ENCODE measurements at regions of chr1 and their contacts with region 1.

Region 1: DNA sequence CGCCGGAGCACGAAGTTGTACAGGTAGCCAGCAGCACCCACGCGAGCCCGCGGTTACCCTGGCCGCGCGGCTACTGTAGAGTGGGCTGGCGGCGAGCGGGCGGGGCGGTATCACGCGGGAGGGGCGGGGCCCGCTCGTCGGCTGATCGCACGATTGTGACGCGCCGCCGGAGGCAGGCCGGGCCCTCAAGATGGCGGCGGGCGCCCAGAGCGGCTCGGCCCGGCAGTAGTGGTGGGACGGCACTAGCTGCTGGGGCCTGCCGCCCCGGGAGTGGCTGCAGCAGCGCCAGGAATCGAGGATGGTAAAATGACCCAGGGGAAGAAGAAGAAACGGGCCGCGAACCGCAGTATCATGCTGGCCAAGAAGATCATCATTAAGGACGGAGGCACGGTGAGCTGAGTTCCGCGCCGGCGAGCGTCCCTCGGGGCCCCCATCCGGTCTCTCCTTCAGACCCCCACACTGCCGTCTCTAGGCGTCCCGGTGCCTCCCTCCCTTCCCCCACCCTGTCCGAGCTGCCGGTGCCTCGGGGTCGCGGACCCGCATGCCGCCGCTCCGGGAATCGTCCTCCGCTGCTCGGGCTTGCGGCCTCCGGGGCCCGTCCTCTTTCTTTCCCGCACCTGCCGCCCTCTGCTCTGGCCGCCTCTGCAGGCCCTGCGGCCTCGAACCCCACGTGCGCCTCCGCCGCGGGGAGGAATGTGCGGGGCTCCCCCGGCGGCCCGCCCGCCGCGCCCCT is 68.3 kb downstream of the SLC35A3 start:
- DNase-seq: peak; percentile 79 to 88
- H3K4me3 ChIP-seq: peak overlapping the region; percentile 60
- H3K4me3 Mint-ChIP-seq: peak overlapping the region; percentile 99
- H3K27ac Mint-ChIP-seq: peak overlapping the region; percentile 99
- H3K4me1 ChIP-seq: 0 out of 2 replicates have a peak, but pooled peaks cover 5% of the 10 kb centered on the region
- H3K4me1 Mint-ChIP-seq: no peaks in the 10 kb centered on the region
- H3K27me3 ChIP-seq: no peaks in the 10 kb centered on the region
- H3K27me3 Mint-ChIP-seq: no peaks in the 10 kb centered on the region
- CTCF ChIP-seq: no peak

Region 2: GRCh38 chr1:99590578-99591209 is 447.4 kb before region 1 on chr1:
- CTCF ChIA-PET with region 1: no interaction called
- POLR2A ChIA-PET with region 1: no interaction called
- intact Hi-C with region 1: no loop called
- DNase-seq: no peak
- H3K4me3 ChIP-seq: no peak overlapping the region
- H3K4me3 Mint-ChIP-seq: no peak overlapping the region
- H3K27ac Mint-ChIP-seq: no peak overlapping the region
- H3K4me1 ChIP-seq: peaks cover 15% of the 10 kb centered on the region; the same call in 1 of the 2 replicates
- H3K4me1 Mint-ChIP-seq: peaks cover 6% of the 10 kb centered on the region
- H3K27me3 ChIP-seq: no peaks in the 10 kb centered on the region
- H3K27me3 Mint-ChIP-seq: no peaks in the 10 kb centered on the region
- CTCF ChIP-seq: no peak

Region 3: GRCh38 chr1:99808391-99809115 is 229.5 kb before region 1 on chr1:
- CTCF ChIA-PET with region 1: no interaction called
- POLR2A ChIA-PET with region 1: interaction called, 5 read pairs
- intact Hi-C with region 1: loop called (anchors 1 kb)
- DNase-seq: peak; percentile 49 to 58
- H3K4me3 ChIP-seq: no peak overlapping the region
- H3K4me3 Mint-ChIP-seq: no peak overlapping the region
- H3K27ac Mint-ChIP-seq: no peak overlapping the region
- H3K4me1 ChIP-seq: 0 out of 2 replicates have a peak, but pooled peaks cover 3% of the 10 kb centered on the region
- H3K4me1 Mint-ChIP-seq: no peaks in the 10 kb centered on the region
- H3K27me3 ChIP-seq: no peaks in the 10 kb centered on the region
- H3K27me3 Mint-ChIP-seq: no peaks in the 10 kb centered on the region
- CTCF ChIP-seq: peak in 1 of 2 experiments; percentile 3

Region 4: DNA sequence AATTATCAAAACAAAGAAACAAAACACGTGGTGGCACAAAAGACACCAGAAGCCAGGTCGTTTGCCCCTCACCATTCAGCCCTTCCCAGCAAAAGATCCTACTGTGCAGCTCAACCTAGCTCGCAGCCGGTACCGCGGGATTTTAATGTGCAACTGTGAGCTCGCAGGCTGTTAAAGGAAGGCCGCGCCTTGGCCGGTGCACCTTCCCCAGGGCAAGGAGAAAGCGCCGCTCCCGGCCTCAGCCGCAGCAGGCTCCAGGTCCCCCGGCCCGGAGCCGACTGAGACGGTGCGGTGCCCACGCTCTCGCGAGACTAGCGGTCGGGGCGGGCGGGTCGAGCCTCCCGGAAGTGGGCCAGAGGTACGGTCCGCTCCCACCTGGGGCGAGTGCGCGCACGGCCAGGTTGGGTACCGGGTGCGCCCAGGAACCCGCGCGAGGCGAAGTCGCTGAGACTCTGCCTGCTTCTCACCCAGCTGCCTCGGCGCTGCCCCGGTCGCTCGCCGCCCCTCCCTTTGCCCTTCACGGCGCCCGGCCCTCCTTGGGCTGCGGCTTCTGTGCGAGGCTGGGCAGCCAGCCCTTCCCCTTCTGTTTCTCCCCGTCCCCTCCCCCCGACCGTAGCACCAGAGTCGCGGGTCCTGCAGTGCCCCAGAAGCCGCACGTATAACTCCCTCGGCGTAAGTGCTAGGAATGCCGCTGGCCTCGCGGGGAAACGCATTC is 188.2 kb before region 1 on chr1 and contains the start of gene AGL:
- CTCF ChIA-PET with region 1: no interaction called
- POLR2A ChIA-PET with region 1: no interaction called
- intact Hi-C with region 1: loop called (anchors 5 kb)
- DNase-seq: peak; percentile 92
- H3K4me3 ChIP-seq: peak within 1 kb of the TSS; percentile 83
- H3K4me3 Mint-ChIP-seq: peak within 1 kb of the TSS; percentile 95
- H3K27ac Mint-ChIP-seq: peak within 1 kb of the TSS; percentile 93
- H3K4me1 ChIP-seq: 0 out of 2 replicates have a peak, but pooled peaks cover 4% of the 10 kb centered on the region
- H3K4me1 Mint-ChIP-seq: peaks cover 24% of the 10 kb centered on the region
- H3K27me3 ChIP-seq: no peaks in the 10 kb centered on the region
- H3K27me3 Mint-ChIP-seq: no peaks in the 10 kb centered on the region
- CTCF ChIP-seq: no peak
- total RNA-seq, gene AGL: 23.6 and 24.2 TPM in 2 replicates

Region 5: DNA sequence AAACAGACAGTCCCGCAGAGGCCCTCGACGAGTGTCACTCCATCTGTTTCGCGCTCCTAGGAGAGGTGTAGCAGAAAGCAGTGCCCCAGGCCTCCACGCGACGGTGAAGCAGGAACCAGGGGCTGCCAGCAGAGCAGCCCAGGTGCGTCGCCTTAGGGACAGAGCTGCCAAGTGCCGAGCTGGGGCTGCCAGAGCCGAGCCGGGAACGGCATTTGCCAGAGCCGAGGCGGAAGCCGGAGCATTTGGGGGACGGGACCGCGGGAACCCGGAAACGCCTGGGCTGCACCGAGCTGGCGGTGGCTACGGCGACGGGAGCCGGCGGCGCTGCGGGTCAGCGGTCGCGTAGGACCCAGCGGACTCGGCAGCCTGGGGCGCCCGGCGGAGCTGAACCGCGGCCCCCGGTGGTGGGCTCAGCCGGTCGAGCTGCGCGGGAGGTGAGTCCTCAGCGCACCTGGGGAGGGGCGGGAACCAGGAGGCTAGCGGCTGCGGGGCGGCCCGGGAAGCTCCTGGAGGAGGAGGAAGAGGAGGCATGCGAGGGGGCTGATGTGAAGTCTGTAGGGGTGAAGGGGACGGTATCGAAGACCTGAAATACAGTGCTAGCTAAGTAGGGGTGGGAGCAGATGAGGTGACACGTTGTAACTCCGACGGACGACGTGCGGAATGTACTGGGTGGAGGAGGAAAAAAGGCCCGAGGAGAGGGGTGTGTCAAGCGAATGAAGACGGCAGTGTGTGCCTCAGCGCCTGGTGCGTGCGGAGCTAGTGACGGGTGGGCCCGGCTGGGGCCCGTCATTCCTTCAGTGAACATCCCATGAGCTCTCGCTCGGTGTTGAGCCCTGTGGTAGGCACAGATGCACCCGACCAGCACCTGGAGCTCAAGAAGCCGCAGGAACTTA is 68.1 kb before region 1 on chr1 and contains the start of gene SLC35A3:
- CTCF ChIA-PET with region 1: no interaction called
- POLR2A ChIA-PET with region 1: interaction called, 7 read pairs
- intact Hi-C with region 1: loop called (anchors 5 kb)
- DNase-seq: peak; percentile 82 to 86
- H3K4me3 ChIP-seq: peak within 1 kb of the TSS; percentile 84
- H3K4me3 Mint-ChIP-seq: peak within 1 kb of the TSS; percentile 86
- H3K27ac Mint-ChIP-seq: peak within 1 kb of the TSS; percentile 87
- H3K4me1 ChIP-seq: peaks cover 6% of the 10 kb centered on the region; the same call in 1 of the 2 replicates
- H3K4me1 Mint-ChIP-seq: no peaks in the 10 kb centered on the region
- H3K27me3 ChIP-seq: no peaks in the 10 kb centered on the region
- H3K27me3 Mint-ChIP-seq: no peaks in the 10 kb centered on the region
- CTCF ChIP-seq: peak in 1 of 2 experiments; percentile 9
- total RNA-seq, gene SLC35A3: 16.9 and 17.4 TPM in 2 replicates

Region 6: GRCh38 chr1:100132566-100133477 is 94.7 kb after region 1 on chr1 and contains the starts of genes SASS6 and TRMT13:
- CTCF ChIA-PET with region 1: no interaction called
- POLR2A ChIA-PET with region 1: interaction called, 12 read pairs
- intact Hi-C with region 1: loop called (anchors 2 kb)
- DNase-seq: peak; percentile 91 to 95
- H3K4me3 ChIP-seq: peak within 1 kb of the TSS; percentile 50
- H3K4me3 Mint-ChIP-seq: peak within 1 kb of the TSS; percentile 98
- H3K27ac Mint-ChIP-seq: peak within 1 kb of the TSS; percentile 99
- H3K4me1 ChIP-seq: no peaks in the 10 kb centered on the region
- H3K4me1 Mint-ChIP-seq: no peaks in the 10 kb centered on the region
- H3K27me3 ChIP-seq: no peaks in the 10 kb centered on the region
- H3K27me3 Mint-ChIP-seq: no peaks in the 10 kb centered on the region
- CTCF ChIP-seq: no peak
- total RNA-seq, gene SASS6: 9.5 and 10.1 TPM in 2 replicates
- total RNA-seq, gene TRMT13: 12.6 and 14.5 TPM in 2 replicates

Measured in Caco-2 (cell line).